MCF 10A (cell line): ENCODE measurements at regions of chr6 and their contacts with region 1.

Region 1: GRCh38 chr6:129709769-129710449 is at the start of gene ARHGAP18:
- DNase-seq: peak; percentile 96
- H3K4me3 Mint-ChIP-seq: peak within 1 kb of the TSS; percentile 84
- H3K27ac Mint-ChIP-seq: peak within 1 kb of the TSS; percentile 79
- H3K4me1 Mint-ChIP-seq: peaks cover 12% of the 10 kb centered on the region
- H3K27me3 Mint-ChIP-seq: no peaks in the 10 kb centered on the region
- CTCF ChIP-seq: no peak
- total RNA-seq, gene ARHGAP18: 14.6 and 22.9 TPM in 2 replicates

Region 2: GRCh38 chr6:129621247-129621646 is 88.7 kb before region 1 on chr6:
- CTCF ChIA-PET with region 1: interaction called, 3 read pairs
- POLR2A ChIA-PET with region 1: interaction called, 13 read pairs
- intact Hi-C with region 1: loop called (anchors 5 kb)
- DNase-seq: peak; percentile 26
- H3K4me3 Mint-ChIP-seq: no peak overlapping the region
- H3K27ac Mint-ChIP-seq: no peak overlapping the region
- H3K4me1 Mint-ChIP-seq: peaks cover 14% of the 10 kb centered on the region
- H3K27me3 Mint-ChIP-seq: no peaks in the 10 kb centered on the region
- CTCF ChIP-seq: peak; percentile 19

Region 3: DNA sequence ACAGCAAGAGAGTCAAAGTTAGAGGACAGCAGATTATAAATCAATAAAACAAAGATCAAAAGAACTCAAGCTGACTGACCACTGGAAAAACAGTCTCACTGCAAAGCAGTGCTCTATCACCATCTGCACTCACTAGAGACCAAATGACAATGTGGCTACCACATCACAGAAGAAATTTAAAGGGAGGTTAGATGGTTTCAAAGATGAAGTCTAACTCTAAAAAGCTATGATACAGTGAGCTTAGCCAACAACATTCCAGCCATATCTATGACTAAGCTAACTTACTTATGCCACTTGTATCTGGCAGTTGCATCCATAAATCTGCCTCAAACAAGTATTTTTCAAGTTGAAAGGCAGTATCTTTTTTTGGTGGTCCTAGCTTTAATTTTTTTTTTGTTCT is 68.6 kb before region 1 on chr6:
- CTCF ChIA-PET with region 1: interaction called, 4 read pairs
- POLR2A ChIA-PET with region 1: interaction called, 23 read pairs
- intact Hi-C with region 1: loop called (anchors 2 kb)
- DNase-seq: peak; percentile 7
- H3K4me3 Mint-ChIP-seq: no peak overlapping the region
- H3K27ac Mint-ChIP-seq: no peak overlapping the region
- H3K4me1 Mint-ChIP-seq: peaks cover 37% of the 10 kb centered on the region
- H3K27me3 Mint-ChIP-seq: no peaks in the 10 kb centered on the region
- CTCF ChIP-seq: no peak

Region 4: GRCh38 chr6:129672881-129673643 is 36.8 kb before region 1 on chr6:
- CTCF ChIA-PET with region 1: interaction called, 6 read pairs
- POLR2A ChIA-PET with region 1: interaction called, 21 read pairs
- intact Hi-C with region 1: loop called (anchors 1 kb)
- DNase-seq: peak; percentile 63
- H3K4me3 Mint-ChIP-seq: peak overlapping the region; percentile 14
- H3K27ac Mint-ChIP-seq: peak overlapping the region; percentile 90
- H3K4me1 Mint-ChIP-seq: peaks cover 45% of the 10 kb centered on the region
- H3K27me3 Mint-ChIP-seq: no peaks in the 10 kb centered on the region
- CTCF ChIP-seq: no peak

Region 5: GRCh38 chr6:129730477-129731165 is 20.7 kb after region 1 on chr6:
- CTCF ChIA-PET with region 1: interaction called, 13 read pairs
- POLR2A ChIA-PET with region 1: interaction called, 7 read pairs
- intact Hi-C with region 1: no loop called
- DNase-seq: peak; percentile 61
- H3K4me3 Mint-ChIP-seq: no peak overlapping the region
- H3K27ac Mint-ChIP-seq: no peak overlapping the region
- H3K4me1 Mint-ChIP-seq: peaks cover 22% of the 10 kb centered on the region
- H3K27me3 Mint-ChIP-seq: no peaks in the 10 kb centered on the region
- CTCF ChIP-seq: peak; percentile 56